Panc1 (cell line): ENCODE measurements at regions of chr6 and their contacts with region 1.

Region 1: GRCh38 chr6:134063966-134064445 is 11.6 kb upstream of the SLC2A12 start:
- DNase-seq: no peak
- ATAC-seq: peak; percentile 90
- H3K4me3 ChIP-seq: no peak overlapping the region
- H3K27ac ChIP-seq: peak overlapping the region; percentile 68
- H3K4me1 ChIP-seq: peaks cover 36% of the 10 kb centered on the region
- H3K27me3 ChIP-seq: no peaks in the 10 kb centered on the region
- CTCF ChIP-seq: peak; percentile 92

Region 2: GRCh38 chr6:133923938-133924593 is 139.9 kb before region 1 on chr6:
- CTCF ChIA-PET with region 1: interaction called, 11 read pairs
- POLR2A ChIA-PET with region 1: no interaction called
- in situ Hi-C with region 1: no loop called
- intact Hi-C with region 1: loop called (anchors 10 kb)
- DNase-seq: peak; percentile 73
- ATAC-seq: peak; percentile 98
- H3K4me3 ChIP-seq: no peak overlapping the region
- H3K27ac ChIP-seq: no peak overlapping the region
- H3K4me1 ChIP-seq: peaks cover 5% of the 10 kb centered on the region; the same call in 1 of the 2 replicates
- H3K27me3 ChIP-seq: no peaks in the 10 kb centered on the region
- CTCF ChIP-seq: peak; percentile 77

Region 3: GRCh38 chr6:133973109-133973971 is 90.7 kb before region 1 on chr6:
- CTCF ChIA-PET with region 1: interaction called, 9 read pairs
- POLR2A ChIA-PET with region 1: interaction called, 7 read pairs
- in situ Hi-C with region 1: no loop called
- intact Hi-C with region 1: loop called (anchors 1 kb)
- DNase-seq: no peak
- ATAC-seq: peak; percentile 72
- H3K4me3 ChIP-seq: no peak overlapping the region
- H3K27ac ChIP-seq: peak overlapping the region; percentile 23
- H3K4me1 ChIP-seq: peaks cover 33% of the 10 kb centered on the region
- H3K27me3 ChIP-seq: no peaks in the 10 kb centered on the region
- CTCF ChIP-seq: peak; percentile 73; the same call in 1 of the 2 replicates

Region 4: DNA sequence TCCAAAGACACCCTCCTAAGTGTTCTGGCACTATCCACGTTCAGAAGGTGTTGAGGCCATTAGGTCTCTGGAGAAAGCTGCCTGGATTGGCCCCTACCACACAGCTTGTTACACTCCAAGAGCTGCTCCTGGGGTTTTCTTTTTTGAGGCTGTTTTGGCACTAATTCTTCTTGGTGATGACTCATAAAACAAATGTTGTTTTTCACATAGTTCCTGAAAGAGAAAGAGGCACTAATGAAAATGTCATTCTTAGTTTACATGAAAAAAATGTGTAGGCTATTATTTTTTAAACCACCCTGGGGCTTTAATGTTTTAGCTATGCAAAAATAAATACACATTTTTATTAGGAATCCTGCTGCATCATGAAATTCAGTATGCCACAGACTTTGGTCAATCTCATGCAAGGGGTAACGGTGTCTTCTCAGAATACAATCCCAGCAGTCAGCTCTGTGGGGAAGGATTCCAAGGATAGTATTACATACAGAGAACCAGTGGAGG is 72.9 kb before region 1 on chr6:
- CTCF ChIA-PET with region 1: no interaction called
- POLR2A ChIA-PET with region 1: interaction called, 11 read pairs
- in situ Hi-C with region 1: no loop called
- intact Hi-C with region 1: loop called (anchors 5 kb)
- DNase-seq: no peak
- ATAC-seq: peak; percentile 67
- H3K4me3 ChIP-seq: no peak overlapping the region
- H3K27ac ChIP-seq: peak overlapping the region; percentile 50
- H3K4me1 ChIP-seq: peaks cover 8% of the 10 kb centered on the region
- H3K27me3 ChIP-seq: no peaks in the 10 kb centered on the region
- CTCF ChIP-seq: no peak

Region 5: GRCh38 chr6:134041093-134041492 is 22.9 kb before region 1 on chr6:
- CTCF ChIA-PET with region 1: no interaction called
- POLR2A ChIA-PET with region 1: no interaction called
- in situ Hi-C with region 1: no loop called
- intact Hi-C with region 1: no loop called
- DNase-seq: no peak
- ATAC-seq: no peak
- H3K4me3 ChIP-seq: no peak overlapping the region
- H3K27ac ChIP-seq: peak overlapping the region; percentile 18; the same call in 1 of the 2 replicates
- H3K4me1 ChIP-seq: peaks cover 8% of the 10 kb centered on the region
- H3K27me3 ChIP-seq: no peaks in the 10 kb centered on the region
- CTCF ChIP-seq: no peak

Region 6: DNA sequence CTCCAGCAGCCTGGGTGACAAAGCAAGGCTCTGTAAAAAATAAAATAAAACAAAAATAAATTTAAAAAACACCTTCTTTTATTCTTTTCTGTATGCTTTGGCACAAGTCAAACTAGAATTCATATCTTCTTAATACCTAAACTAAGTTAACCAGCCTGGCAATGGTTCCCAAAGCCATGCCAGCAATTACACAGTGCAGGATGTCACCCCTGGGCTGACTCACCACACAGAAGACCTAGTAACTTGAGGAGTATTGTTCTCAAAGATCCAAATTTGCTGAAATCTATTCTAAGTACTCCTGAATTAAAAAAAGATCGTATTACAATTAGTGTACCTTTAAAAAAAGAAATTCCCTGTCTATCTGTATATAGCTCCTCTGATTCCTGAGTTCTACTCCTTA is 416.6 kb after region 1 on chr6:
- CTCF ChIA-PET with region 1: no interaction called
- POLR2A ChIA-PET with region 1: no interaction called
- in situ Hi-C with region 1: no loop called
- intact Hi-C with region 1: no loop called
- DNase-seq: no peak
- ATAC-seq: no peak
- H3K4me3 ChIP-seq: no peak overlapping the region
- H3K27ac ChIP-seq: no peak overlapping the region
- H3K4me1 ChIP-seq: no peaks in the 10 kb centered on the region
- H3K27me3 ChIP-seq: no peaks in the 10 kb centered on the region
- CTCF ChIP-seq: no peak